Caco-2 (cell line): ENCODE measurements at regions of chr11 and their contacts with region 1.

Region 1: GRCh38 chr11:75499449-75500190 is 26.1 kb downstream of the GDPD5 start:
- DNase-seq: peak; percentile 59 to 73
- H3K4me3 ChIP-seq: no peak overlapping the region
- H3K4me3 Mint-ChIP-seq: no peak overlapping the region
- H3K27ac Mint-ChIP-seq: peak overlapping the region; percentile 30
- H3K4me1 ChIP-seq: peaks cover 40% of the 10 kb centered on the region
- H3K4me1 Mint-ChIP-seq: peaks cover 27% of the 10 kb centered on the region
- H3K27me3 ChIP-seq: no peaks in the 10 kb centered on the region
- H3K27me3 Mint-ChIP-seq: no peaks in the 10 kb centered on the region
- CTCF ChIP-seq: no peak

Region 2: GRCh38 chr11:75371941-75372789 is 127.5 kb before region 1 on chr11:
- CTCF ChIA-PET with region 1: no interaction called
- POLR2A ChIA-PET with region 1: no interaction called
- intact Hi-C with region 1: no loop called
- DNase-seq: peak; percentile 74 to 78
- H3K4me3 ChIP-seq: no peak overlapping the region
- H3K4me3 Mint-ChIP-seq: peak overlapping the region; percentile 53
- H3K27ac Mint-ChIP-seq: peak overlapping the region; percentile 79
- H3K4me1 ChIP-seq: peaks cover 69% of the 10 kb centered on the region
- H3K4me1 Mint-ChIP-seq: peaks cover 58% of the 10 kb centered on the region
- H3K27me3 ChIP-seq: no peaks in the 10 kb centered on the region
- H3K27me3 Mint-ChIP-seq: no peaks in the 10 kb centered on the region
- CTCF ChIP-seq: no peak

Region 3: GRCh38 chr11:75445315-75445953 is 54.2 kb before region 1 on chr11:
- CTCF ChIA-PET with region 1: interaction called, 3 read pairs
- POLR2A ChIA-PET with region 1: no interaction called
- intact Hi-C with region 1: loop called (anchors 5 kb)
- DNase-seq: peak; percentile 84 to 92
- H3K4me3 ChIP-seq: no peak overlapping the region
- H3K4me3 Mint-ChIP-seq: no peak overlapping the region
- H3K27ac Mint-ChIP-seq: no peak overlapping the region
- H3K4me1 ChIP-seq: no peaks in the 10 kb centered on the region
- H3K4me1 Mint-ChIP-seq: no peaks in the 10 kb centered on the region
- H3K27me3 ChIP-seq: no peaks in the 10 kb centered on the region
- H3K27me3 Mint-ChIP-seq: no peaks in the 10 kb centered on the region
- CTCF ChIP-seq: peak; percentile 99 to 100

Region 4: GRCh38 chr11:75525596-75526541 is 26.2 kb after region 1 on chr11 and contains the start of gene GDPD5:
- CTCF ChIA-PET with region 1: interaction called, 4 read pairs
- POLR2A ChIA-PET with region 1: interaction called, 3 read pairs
- intact Hi-C with region 1: loop called (anchors 1 kb)
- DNase-seq: peak; percentile 95 to 96
- H3K4me3 ChIP-seq: peak within 1 kb of the TSS; percentile 79
- H3K4me3 Mint-ChIP-seq: peak within 1 kb of the TSS; percentile 76
- H3K27ac Mint-ChIP-seq: peak within 1 kb of the TSS; percentile 24
- H3K4me1 ChIP-seq: peaks cover 11% of the 10 kb centered on the region; the same call in 1 of the 2 replicates
- H3K4me1 Mint-ChIP-seq: peaks cover 7% of the 10 kb centered on the region
- H3K27me3 ChIP-seq: no peaks in the 10 kb centered on the region
- H3K27me3 Mint-ChIP-seq: no peaks in the 10 kb centered on the region
- CTCF ChIP-seq: peak; percentile 52 to 64
- total RNA-seq, gene GDPD5: 25.7 and 28.6 TPM in 2 replicates